IMR-90 (cell line): ENCODE measurements at regions of chr12 and their contacts with region 1.

Region 1: DNA sequence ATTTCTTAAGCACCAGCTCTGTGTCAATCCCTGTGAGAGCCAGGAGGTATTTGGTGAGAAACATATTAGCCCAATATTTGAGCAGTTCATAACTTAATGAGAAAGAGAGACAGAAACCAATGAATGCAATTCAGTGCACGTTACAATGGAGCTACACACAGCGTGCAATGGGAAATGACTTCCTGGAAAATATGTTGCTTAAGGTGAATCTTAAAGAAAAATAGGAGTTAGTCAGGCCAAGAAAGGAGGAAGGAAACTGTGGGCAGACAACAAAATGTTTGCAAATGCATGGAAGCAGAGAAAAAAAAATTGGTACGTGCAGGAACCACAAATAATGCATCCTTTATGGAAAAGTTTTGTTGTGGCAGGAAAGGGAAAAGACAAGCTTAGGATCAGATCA is 481.7 kb downstream of the BCAT1 start:
- DNase-seq: no peak
- ATAC-seq: no peak
- H3K4me3 ChIP-seq: no peak overlapping the region
- H3K27ac ChIP-seq: no peak overlapping the region
- H3K4me1 ChIP-seq: no peaks in the 10 kb centered on the region; the same call in 1 of the 2 replicates
- H3K27me3 ChIP-seq: no peaks in the 10 kb centered on the region
- CTCF ChIP-seq: no peak
- POLR2A ChIP-seq: no peak
- RAD21 ChIP-seq: no peak

Region 2: DNA sequence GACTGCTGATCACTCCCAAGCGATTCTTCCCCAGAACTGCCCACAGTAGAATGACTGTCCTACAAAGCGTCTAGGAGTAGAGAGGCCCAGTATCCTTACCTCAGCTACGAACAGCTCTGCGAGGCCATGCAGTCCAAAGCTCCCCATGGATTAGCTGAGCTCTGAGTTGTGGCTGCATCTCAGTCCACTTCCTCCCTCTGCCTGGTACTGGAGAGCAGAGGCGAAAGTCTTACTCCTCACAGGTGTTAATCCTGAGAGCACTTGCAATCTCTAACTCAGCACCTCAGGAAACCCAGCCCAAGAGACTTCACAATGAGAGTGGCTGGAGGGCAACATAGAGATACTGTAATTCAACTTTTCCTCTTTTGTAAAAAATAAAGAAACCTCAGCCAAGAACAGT is 11.4 kb before region 1 on chr12:
- CTCF ChIA-PET with region 1: no interaction called
- POLR2A ChIA-PET with region 1: no interaction called
- dilution Hi-C with region 1: no loop called
- in situ Hi-C with region 1: no loop called
- intact Hi-C with region 1: loop called (anchors 1 kb)
- DNase-seq: no peak
- ATAC-seq: no peak
- H3K4me3 ChIP-seq: no peak overlapping the region
- H3K27ac ChIP-seq: no peak overlapping the region
- H3K4me1 ChIP-seq: peaks cover 9% of the 10 kb centered on the region; the same call in 1 of the 2 replicates
- H3K27me3 ChIP-seq: no peaks in the 10 kb centered on the region
- CTCF ChIP-seq: no peak
- POLR2A ChIP-seq: no peak
- RAD21 ChIP-seq: no peak

Region 3: GRCh38 chr12:24478254-24478653 is 11.0 kb after region 1 on chr12:
- CTCF ChIA-PET with region 1: interaction called, 14 read pairs
- POLR2A ChIA-PET with region 1: no interaction called
- dilution Hi-C with region 1: no loop called
- in situ Hi-C with region 1: no loop called
- intact Hi-C with region 1: no loop called
- DNase-seq: no peak
- ATAC-seq: no peak
- H3K4me3 ChIP-seq: no peak overlapping the region
- H3K27ac ChIP-seq: no peak overlapping the region
- H3K4me1 ChIP-seq: peaks cover 4% of the 10 kb centered on the region
- H3K27me3 ChIP-seq: no peaks in the 10 kb centered on the region
- CTCF ChIP-seq: no peak
- POLR2A ChIP-seq: no peak
- RAD21 ChIP-seq: no peak